ENCODE measurements at regions of chr11 and their contacts with region 1.

Region 1: DNA sequence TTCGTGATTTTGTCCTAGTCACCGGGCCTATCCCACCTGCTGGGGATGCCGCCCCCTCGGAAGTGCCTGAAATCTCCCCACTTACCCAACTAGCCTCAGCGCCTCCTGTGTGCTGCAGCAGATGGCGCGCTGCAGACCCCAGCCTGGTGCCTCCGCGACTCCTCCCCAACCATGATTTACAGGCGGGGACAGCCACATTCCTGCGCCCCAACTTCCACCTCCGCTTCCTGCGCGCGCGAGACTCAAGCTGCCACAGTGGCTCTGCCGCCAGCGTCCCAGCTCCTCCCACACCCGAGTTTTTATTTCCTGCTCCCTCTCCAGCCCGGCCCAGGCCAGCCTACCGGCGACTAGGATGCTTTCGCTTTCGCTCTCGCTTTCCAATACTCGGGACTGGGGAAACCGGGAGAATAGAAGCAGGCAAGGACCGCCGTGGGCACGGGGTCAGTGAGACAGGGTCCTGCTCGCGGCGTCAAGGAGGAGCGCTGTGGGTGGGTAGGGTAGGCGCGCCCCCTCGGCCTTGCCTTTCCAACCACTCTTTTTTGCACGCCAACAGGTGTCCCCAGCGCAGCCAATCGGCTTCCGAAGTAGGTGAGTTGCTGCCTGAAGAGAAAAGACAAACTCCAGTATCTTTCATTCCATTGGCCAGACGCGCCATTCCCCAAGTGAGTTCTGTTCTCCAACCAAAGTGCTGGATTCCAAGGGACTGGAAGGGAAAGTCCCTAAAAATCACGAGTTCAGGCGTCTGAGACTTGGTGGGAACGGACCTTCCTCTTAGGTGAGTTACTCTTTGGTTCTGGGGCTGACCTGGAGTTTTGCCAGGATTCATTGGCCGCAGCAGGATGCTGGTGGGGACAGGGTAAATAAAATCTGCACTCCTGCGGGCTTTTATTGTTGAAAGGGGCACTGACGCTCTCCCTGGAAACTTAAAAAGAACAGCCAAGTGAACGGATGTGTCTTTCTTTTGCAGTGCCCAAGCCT is at the start of gene FAM111A:
- DNase-seq: peak; percentile 97
- H3K4me3 Mint-ChIP-seq: peak within 1 kb of the TSS; percentile 91
- H3K27ac Mint-ChIP-seq: peak within 1 kb of the TSS; percentile 96
- H3K4me1 Mint-ChIP-seq: peaks cover 59% of the 10 kb centered on the region
- H3K27me3 Mint-ChIP-seq: no peaks in the 10 kb centered on the region
- total RNA-seq, gene FAM111A: 62.2 and 71.2 TPM in 2 replicates

Region 2: GRCh38 chr11:58524232-58525036 is 618.4 kb before region 1 on chr11:
- intact Hi-C with region 1: loop called (anchors 5 kb)
- DNase-seq: peak; percentile 84
- H3K4me3 Mint-ChIP-seq: peak overlapping the region; percentile 79
- H3K27ac Mint-ChIP-seq: peak overlapping the region; percentile 91
- H3K4me1 Mint-ChIP-seq: peaks cover 22% of the 10 kb centered on the region
- H3K27me3 Mint-ChIP-seq: no peaks in the 10 kb centered on the region

Region 3: GRCh38 chr11:58888579-58888978 is 254.2 kb before region 1 on chr11:
- intact Hi-C with region 1: no loop called
- DNase-seq: no peak
- H3K4me3 Mint-ChIP-seq: no peak overlapping the region
- H3K27ac Mint-ChIP-seq: no peak overlapping the region
- H3K4me1 Mint-ChIP-seq: no peaks in the 10 kb centered on the region
- H3K27me3 Mint-ChIP-seq: no peaks in the 10 kb centered on the region

Region 4: GRCh38 chr11:59106363-59107336 is 36.2 kb before region 1 on chr11 and contains the start of gene FAM111B:
- intact Hi-C with region 1: loop called (anchors 1 kb)
- DNase-seq: peak; percentile 93
- H3K4me3 Mint-ChIP-seq: peak within 1 kb of the TSS; percentile 94
- H3K27ac Mint-ChIP-seq: peak within 1 kb of the TSS; percentile 85
- H3K4me1 Mint-ChIP-seq: peaks cover 66% of the 10 kb centered on the region
- H3K27me3 Mint-ChIP-seq: no peaks in the 10 kb centered on the region
- total RNA-seq, gene FAM111B: 68.4 and 70.1 TPM in 2 replicates

Region 5: GRCh38 chr11:59207988-59208451 is 65.2 kb after region 1 on chr11:
- intact Hi-C with region 1: loop called (anchors 2 kb)
- DNase-seq: peak; percentile 73
- H3K4me3 Mint-ChIP-seq: peak overlapping the region; percentile 59
- H3K27ac Mint-ChIP-seq: peak overlapping the region; percentile 64
- H3K4me1 Mint-ChIP-seq: peaks cover 29% of the 10 kb centered on the region
- H3K27me3 Mint-ChIP-seq: peaks cover 56% of the 10 kb centered on the region

Region 6: GRCh38 chr11:59335001-59335400 is 192.2 kb after region 1 on chr11:
- intact Hi-C with region 1: no loop called
- DNase-seq: no peak
- H3K4me3 Mint-ChIP-seq: no peak overlapping the region
- H3K27ac Mint-ChIP-seq: no peak overlapping the region
- H3K4me1 Mint-ChIP-seq: no peaks in the 10 kb centered on the region
- H3K27me3 Mint-ChIP-seq: no peaks in the 10 kb centered on the region

Region 7: DNA sequence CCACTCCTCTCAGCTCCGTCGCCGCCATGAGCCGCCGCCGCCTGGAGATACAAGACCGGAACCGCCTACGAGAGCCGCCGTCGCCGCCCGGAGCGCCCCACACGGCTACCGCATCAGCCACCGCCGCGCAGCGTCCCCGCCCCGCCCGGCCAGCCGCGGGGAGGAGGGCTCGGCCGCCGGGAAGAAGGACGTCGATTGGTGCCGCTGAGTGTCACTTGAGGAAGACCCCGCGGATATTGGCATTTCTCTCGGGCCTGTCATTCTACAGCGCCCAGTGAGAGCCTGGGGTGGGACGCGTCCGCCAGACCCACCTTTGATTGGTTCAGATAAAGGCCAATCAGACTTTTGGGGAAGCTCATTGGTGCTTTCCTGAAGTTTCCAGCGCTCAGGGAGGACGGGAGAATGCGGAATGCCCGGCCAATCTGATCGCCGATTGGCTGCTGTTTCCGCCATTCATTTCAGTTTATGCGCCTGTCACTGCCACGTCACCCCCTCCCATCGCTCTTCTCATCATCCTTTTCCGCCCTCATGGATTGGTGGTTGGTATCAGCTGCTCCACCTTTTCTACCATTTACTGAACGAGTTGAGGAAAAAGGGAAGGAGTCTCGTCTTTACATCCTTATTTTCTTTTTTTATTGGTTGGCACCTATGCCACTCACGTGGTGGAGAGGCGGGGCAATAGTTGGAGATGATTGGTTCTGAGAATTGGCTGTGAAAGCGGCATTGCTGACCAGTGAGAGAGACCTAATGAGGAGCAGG is 473.0 kb after region 1 on chr11 and contains the start of gene OSBP:
- intact Hi-C with region 1: loop called (anchors 10 kb)
- DNase-seq: peak; percentile 99
- H3K4me3 Mint-ChIP-seq: peak within 1 kb of the TSS; percentile 94
- H3K27ac Mint-ChIP-seq: peak within 1 kb of the TSS; percentile 91
- H3K4me1 Mint-ChIP-seq: peaks cover 43% of the 10 kb centered on the region
- H3K27me3 Mint-ChIP-seq: no peaks in the 10 kb centered on the region
- total RNA-seq, gene OSBP: 39.7 and 40.1 TPM in 2 replicates

Measured in activated CD4-positive, alpha-beta T cell treated with anti-CD3 and anti-CD28 coated beads, Interleukin-2, amount 10 ng/mL, durations not matched to agents 24 days and 14 days (primary cell).